Panc1 (cell line): ENCODE measurements at regions of chr15 and their contacts with region 1.

Region 1: DNA sequence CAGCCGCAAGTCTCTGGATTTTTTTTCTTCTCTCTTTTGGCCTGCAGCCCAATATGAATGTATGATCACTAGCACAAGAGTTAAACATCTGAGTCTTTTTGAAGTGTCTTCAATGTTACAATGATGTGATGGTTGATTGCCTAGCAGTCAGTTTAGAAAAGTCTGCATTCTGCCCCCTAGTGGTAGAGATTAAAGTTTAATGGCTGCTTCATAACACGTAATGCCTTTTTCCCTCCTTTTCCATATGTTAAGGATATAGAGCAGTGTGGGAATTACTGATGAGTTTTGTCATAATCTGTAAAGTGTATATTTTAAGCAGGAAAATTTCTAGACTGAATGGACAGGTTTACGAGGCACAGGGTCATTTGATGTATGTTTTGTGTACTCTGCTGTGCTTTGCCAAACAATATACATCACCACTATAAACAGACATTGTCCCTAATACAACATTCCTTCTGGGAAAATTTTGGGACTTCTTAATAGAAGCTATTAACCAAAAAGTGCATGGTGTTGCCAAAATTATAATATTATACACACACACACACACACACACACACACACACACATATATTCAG is 1038.5 kb upstream of the NR2F2 start:
- DNase-seq: no peak
- ATAC-seq: no peak; the same call in 1 of the 2 replicates
- H3K4me3 ChIP-seq: no peak overlapping the region
- H3K27ac ChIP-seq: no peak overlapping the region
- H3K4me1 ChIP-seq: no peaks in the 10 kb centered on the region
- H3K27me3 ChIP-seq: no peaks in the 10 kb centered on the region
- CTCF ChIP-seq: peak; percentile 70; the same call in 1 of the 2 replicates

Region 2: GRCh38 chr15:95025924-95026728 is 265.9 kb before region 1 on chr15:
- CTCF ChIA-PET with region 1: no interaction called
- POLR2A ChIA-PET with region 1: no interaction called
- in situ Hi-C with region 1: no loop called
- intact Hi-C with region 1: loop called (anchors 5 kb)
- DNase-seq: no peak
- ATAC-seq: peak; percentile 83
- H3K4me3 ChIP-seq: no peak overlapping the region
- H3K27ac ChIP-seq: no peak overlapping the region
- H3K4me1 ChIP-seq: no peaks in the 10 kb centered on the region
- H3K27me3 ChIP-seq: no peaks in the 10 kb centered on the region
- CTCF ChIP-seq: peak; percentile 78

Region 3: GRCh38 chr15:95059418-95059817 is 232.6 kb before region 1 on chr15:
- CTCF ChIA-PET with region 1: no interaction called
- POLR2A ChIA-PET with region 1: no interaction called
- in situ Hi-C with region 1: no loop called
- intact Hi-C with region 1: no loop called
- DNase-seq: no peak
- ATAC-seq: no peak
- H3K4me3 ChIP-seq: no peak overlapping the region
- H3K27ac ChIP-seq: no peak overlapping the region
- H3K4me1 ChIP-seq: no peaks in the 10 kb centered on the region
- H3K27me3 ChIP-seq: no peaks in the 10 kb centered on the region
- CTCF ChIP-seq: no peak

Region 4: DNA sequence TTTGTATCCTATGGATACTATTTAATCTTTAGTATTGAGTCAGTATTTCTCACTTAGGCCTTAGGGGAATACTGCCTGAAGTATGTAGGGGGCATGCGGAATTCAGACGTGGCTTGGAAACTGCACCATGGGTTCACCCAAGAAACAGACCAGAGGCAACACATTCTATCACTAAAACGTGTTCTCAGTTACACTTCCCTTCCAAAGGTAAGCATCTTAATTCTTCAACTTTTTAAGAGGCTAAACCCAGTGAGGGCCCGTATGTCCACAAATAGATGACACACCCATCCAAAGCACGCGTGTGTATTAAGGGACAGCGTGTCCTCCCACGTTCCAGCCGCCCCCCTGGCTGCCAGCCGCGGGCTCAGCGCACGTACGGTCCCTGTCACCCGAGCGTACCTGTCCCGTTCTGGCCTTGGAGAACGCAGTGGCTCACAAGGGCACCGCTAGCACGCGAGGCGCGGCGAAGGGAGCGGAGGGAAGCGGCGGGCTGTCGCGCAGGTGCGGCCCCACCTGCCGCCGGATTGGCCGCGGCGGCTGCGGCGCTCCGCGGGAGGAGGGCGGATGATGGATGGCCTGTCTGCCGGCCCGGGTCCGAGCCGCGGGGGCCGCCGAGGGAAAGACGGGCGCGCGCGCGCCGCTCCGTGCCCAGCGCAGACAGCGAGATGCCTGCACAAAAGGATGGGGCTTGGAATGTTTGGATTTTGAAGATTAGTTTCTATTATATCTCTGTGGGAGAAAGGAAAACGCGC is 34.6 kb after region 1 on chr15:
- CTCF ChIA-PET with region 1: interaction called, 18 read pairs
- POLR2A ChIA-PET with region 1: no interaction called
- in situ Hi-C with region 1: no loop called
- intact Hi-C with region 1: no loop called
- DNase-seq: no peak
- ATAC-seq: no peak
- H3K4me3 ChIP-seq: no peak overlapping the region
- H3K27ac ChIP-seq: no peak overlapping the region
- H3K4me1 ChIP-seq: peaks cover 9% of the 10 kb centered on the region
- H3K27me3 ChIP-seq: no peaks in the 10 kb centered on the region
- CTCF ChIP-seq: no peak

Region 5: DNA sequence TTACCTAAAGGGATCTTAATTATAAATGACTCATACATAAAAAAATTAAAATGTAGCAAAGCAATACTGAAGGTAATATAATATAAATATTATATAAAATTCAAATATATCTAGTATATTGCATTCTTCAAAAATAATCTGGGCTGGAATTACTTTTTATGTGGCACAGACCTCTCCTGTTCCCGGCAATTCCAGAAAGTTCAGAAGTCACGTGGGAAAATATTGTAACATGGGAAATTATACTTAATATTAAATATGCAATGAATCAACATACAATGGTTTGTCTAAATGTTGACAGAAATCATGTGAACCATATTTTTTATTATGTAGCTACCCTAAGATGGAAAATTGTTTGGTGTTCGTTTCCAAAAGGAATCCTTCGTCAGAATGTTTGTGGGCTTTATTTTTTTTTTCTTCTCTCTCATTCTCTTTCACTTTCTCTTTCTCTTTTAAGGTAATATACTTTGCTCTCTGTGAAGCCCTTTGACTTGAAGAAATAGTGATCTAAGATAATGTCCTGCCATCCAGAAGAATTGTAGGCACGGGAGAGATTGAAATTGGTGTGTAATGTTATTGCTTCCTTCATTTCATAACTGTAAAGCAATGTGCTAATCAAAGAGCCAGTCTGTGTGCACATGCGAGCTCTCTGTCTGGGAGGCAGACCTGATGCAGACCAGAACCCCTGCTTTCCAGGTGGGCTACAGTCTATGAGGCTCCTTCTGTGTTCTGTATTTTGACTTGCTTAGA is 1597.9 kb after region 1 on chr15:
- CTCF ChIA-PET with region 1: no interaction called
- POLR2A ChIA-PET with region 1: no interaction called
- in situ Hi-C with region 1: no loop called
- intact Hi-C with region 1: no loop called
- DNase-seq: no peak
- ATAC-seq: no peak
- H3K4me3 ChIP-seq: peak overlapping the region; percentile 24 to 48
- H3K27ac ChIP-seq: peak overlapping the region; percentile 10; the same call in 1 of the 2 replicates
- H3K4me1 ChIP-seq: no peaks in the 10 kb centered on the region
- H3K27me3 ChIP-seq: no peaks in the 10 kb centered on the region
- CTCF ChIP-seq: no peak